Activated T-helper 1 cell treated with anti-CD3 and anti-CD28 coated beads, Interleukin-12 subunit alpha, Interleukin-12 subunit beta, Interleukin-2, Interleukin-4 antibody, amounts not matched to agents 30 ng/mL and 10 ng/mL and 1 ng/mL, durations not matched to agents 14 hours and 24 hours and 36 hours (primary cell): ENCODE measurements at regions of chr22 and their contacts with region 1.

Region 1: DNA sequence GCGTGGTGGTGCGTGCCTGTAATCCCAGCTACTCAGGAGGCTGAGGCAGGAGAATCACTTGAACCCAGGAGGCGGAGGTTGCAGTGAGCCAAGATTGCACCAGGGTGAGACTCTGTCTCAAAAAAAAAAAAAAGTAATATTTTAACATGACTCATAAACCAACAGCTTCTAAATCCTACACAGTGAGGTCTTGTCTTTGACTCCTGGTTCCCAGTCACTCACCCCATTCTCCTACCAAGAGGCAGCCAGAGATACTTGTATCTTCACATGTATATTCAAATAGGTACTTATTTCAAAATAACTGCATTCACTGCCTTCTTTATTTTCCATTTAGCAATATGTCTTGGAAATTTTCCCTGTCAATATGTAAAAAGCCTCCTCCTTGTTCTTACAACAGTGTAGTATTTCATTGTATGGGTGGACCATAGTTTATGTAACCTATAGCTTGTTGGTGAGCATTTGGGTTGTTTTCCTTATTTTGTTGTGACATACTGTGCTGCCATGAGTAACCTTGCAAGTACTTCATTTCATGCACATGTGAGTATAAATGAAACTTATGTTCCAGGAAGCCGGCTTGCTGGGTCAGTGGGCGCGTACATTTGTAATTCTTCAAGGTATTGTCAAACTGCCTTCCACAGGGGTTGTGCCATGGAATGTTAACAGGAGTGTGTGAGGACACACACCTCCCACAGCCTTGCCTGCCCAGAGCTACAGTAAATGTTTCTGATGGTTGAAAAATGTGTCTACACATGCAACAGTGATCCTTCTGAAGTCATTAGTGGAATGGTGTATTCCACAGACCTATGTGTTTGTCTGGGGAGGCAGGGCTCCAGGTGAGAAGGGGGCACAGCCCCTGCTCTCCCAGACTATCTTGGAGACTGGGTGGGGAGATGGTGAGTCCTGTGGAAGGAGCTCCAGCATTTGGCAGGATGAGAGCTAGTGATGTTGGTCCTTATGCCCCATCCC is 47.9 kb downstream of the OSBP2 start:
- DNase-seq: no peak
- H3K4me3 Mint-ChIP-seq: peak overlapping the region; percentile 48
- H3K27ac Mint-ChIP-seq: peak overlapping the region; percentile 96
- H3K4me1 Mint-ChIP-seq: peaks cover 81% of the 10 kb centered on the region
- H3K27me3 Mint-ChIP-seq: no peaks in the 10 kb centered on the region

Region 2: GRCh38 chr22:30159561-30160353 is 582.8 kb before region 1 on chr22:
- intact Hi-C with region 1: loop called (anchors 10 kb)
- DNase-seq: no peak
- H3K4me3 Mint-ChIP-seq: peak overlapping the region; percentile 45
- H3K27ac Mint-ChIP-seq: peak overlapping the region; percentile 93
- H3K4me1 Mint-ChIP-seq: peaks cover 70% of the 10 kb centered on the region
- H3K27me3 Mint-ChIP-seq: peaks cover 2% of the 10 kb centered on the region

Region 3: GRCh38 chr22:30649430-30650007 is 93.1 kb before region 1 on chr22:
- intact Hi-C with region 1: loop called (anchors 1 kb)
- DNase-seq: peak; percentile 72
- H3K4me3 Mint-ChIP-seq: peak overlapping the region; percentile 45
- H3K27ac Mint-ChIP-seq: peak overlapping the region; percentile 89
- H3K4me1 Mint-ChIP-seq: peaks cover 47% of the 10 kb centered on the region
- H3K27me3 Mint-ChIP-seq: no peaks in the 10 kb centered on the region

Region 4: DNA sequence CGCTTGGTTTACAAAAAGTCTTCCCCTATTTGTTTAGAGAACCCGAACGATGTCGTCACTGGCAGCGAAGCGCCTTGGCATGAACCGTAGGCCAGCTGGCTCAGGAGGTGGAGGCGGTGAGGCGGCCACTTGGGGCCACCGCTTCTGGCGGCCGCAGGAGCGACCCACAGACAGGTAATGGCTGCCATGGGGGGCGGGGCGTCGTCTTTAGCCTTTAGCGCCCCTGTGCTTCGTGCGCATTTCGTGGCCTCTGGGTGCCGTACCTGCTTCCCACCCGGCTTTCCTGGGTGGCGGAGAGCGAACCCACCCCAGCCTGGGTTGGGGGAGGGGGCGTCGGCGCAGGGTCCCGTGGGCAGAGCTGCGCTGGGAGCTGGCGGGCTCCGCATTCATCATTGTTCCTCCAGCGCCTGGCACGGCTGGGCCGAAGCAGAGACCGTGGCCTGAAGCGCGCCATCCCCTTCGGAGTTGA is 48.4 kb before region 1 on chr22:
- intact Hi-C with region 1: loop called (anchors 1 kb)
- DNase-seq: peak; percentile 44
- H3K4me3 Mint-ChIP-seq: peak overlapping the region; percentile 88
- H3K27ac Mint-ChIP-seq: no peak overlapping the region
- H3K4me1 Mint-ChIP-seq: peaks cover 21% of the 10 kb centered on the region
- H3K27me3 Mint-ChIP-seq: peaks cover 11% of the 10 kb centered on the region

Region 5: GRCh38 chr22:30717331-30717921 is 25.1 kb before region 1 on chr22:
- intact Hi-C with region 1: no loop called
- DNase-seq: no peak
- H3K4me3 Mint-ChIP-seq: no peak overlapping the region
- H3K27ac Mint-ChIP-seq: peak overlapping the region; percentile 48
- H3K4me1 Mint-ChIP-seq: peaks cover 13% of the 10 kb centered on the region
- H3K27me3 Mint-ChIP-seq: peaks cover under 1% of the 10 kb centered on the region

Region 6: DNA sequence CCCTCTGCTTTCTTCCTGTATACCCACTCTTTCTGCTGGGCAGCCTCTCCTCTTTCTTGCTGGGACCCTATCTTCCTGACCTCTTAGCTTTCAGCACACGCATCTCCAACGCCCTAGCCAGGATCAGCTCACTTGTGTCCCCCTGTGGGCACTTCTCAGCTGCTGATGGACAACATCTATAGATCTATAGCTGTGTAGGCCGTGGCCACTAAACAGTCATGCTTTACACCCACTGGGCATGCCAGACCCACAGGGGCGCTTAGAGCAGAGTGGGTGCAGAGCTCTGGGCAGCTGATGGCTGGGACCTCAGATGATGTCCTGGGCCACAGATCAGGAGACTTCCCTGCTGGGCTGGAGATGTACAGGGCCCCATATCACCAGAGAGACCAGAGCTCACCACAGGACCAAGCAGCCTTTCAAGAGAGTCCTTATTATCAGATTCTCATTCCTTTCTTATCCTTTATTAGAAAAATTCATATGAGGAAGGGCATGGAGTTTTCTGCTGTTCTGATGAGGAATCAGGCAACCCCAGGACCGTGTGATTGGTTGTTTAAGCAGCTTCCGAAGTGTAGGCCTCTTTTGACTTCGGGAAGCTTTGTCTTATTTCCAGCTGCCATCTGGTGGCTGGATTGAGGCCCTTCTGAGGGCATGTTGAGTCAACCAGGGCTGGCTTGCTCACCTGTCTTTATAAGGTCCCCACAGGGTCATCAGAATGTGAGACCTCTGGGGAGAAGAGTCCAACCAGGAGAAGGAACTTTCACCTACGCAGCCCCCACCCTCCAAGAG is 12.6 kb after region 1 on chr22:
- intact Hi-C with region 1: loop called (anchors 1 kb)
- DNase-seq: peak; percentile 45
- H3K4me3 Mint-ChIP-seq: no peak overlapping the region
- H3K27ac Mint-ChIP-seq: peak overlapping the region; percentile 29
- H3K4me1 Mint-ChIP-seq: peaks cover 11% of the 10 kb centered on the region
- H3K27me3 Mint-ChIP-seq: peaks cover 4% of the 10 kb centered on the region